Heart right ventricle (tissue), 16 donors: ENCODE measurements at regions of chr7 and their contacts with region 1.

Region 1: GRCh38 chr7:24979863-24980533 is at the start of gene OSBPL3:
- DNase-seq: peak; percentile 94 to 95
- ATAC-seq: peak; percentile 97 to 99 (median 98)
- H3K4me3 ChIP-seq: peak within 1 kb of the TSS; percentile 58 to 90 (median 76)
- H3K27ac ChIP-seq: peak within 1 kb of the TSS; percentile 59 to 92 (median 84)
- H3K4me1 ChIP-seq: peaks cover 0 to 69% (median 12%) of the 10 kb centered on the region in 9 donors
- H3K27me3 ChIP-seq: peaks cover 0 to 14% (median 0%) of the 10 kb centered on the region in 7 donors
- CTCF ChIP-seq: no peak
- total RNA-seq, gene OSBPL3: 1.8 to 10.6 (median 4.6) TPM

Region 2: GRCh38 chr7:24819916-24820689 is 159.9 kb before region 1 on chr7:
- intact Hi-C with region 1: loop called (anchors 2 to 10 kb)
- DNase-seq: peak; percentile 66 to 89
- ATAC-seq: peak; percentile 84 to 96 (median 92)
- H3K4me3 ChIP-seq: no peak overlapping the region
- H3K27ac ChIP-seq: peak overlapping the region in 1 of 10 donors; percentile 75
- H3K4me1 ChIP-seq: peaks cover 0 to 28% (median 11%) of the 10 kb centered on the region in 9 donors
- H3K27me3 ChIP-seq: no peaks in the 10 kb centered on the region
- CTCF ChIP-seq: peak; percentile 60 to 94 (median 90)

Region 3: DNA sequence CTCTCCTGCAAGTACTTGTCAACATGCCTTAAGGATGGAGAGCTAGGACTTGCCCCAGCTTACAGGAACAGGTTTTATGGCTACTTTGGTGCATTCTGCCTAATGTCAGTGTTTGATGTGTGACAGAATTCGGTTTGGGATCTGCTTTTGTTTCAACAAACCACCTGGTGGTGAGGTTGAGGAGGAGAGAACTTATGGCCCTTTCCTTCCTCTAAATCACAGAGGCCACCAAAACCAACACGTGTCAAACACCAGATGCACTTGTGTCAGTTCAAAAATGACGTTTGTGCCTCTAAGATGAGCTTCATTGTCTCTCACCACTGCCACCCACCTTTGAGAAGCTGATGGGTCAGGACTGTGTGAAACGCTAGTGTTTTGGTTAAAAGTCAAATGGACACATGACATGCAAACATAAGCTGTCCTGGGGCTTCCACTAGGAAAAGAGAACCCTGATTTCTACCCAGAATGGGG is 83.9 kb before region 1 on chr7:
- intact Hi-C with region 1: loop called in 4 of 10 experiments (anchors 10 kb)
- DNase-seq: no peak
- ATAC-seq: no peak
- H3K4me3 ChIP-seq: no peak overlapping the region
- H3K27ac ChIP-seq: no peak overlapping the region
- H3K4me1 ChIP-seq: peaks cover 0 to 25% (median 0%) of the 10 kb centered on the region in 9 donors
- H3K27me3 ChIP-seq: no peaks in the 10 kb centered on the region
- CTCF ChIP-seq: no peak

Region 4: GRCh38 chr7:24907311-24907886 is 72.6 kb before region 1 on chr7:
- intact Hi-C with region 1: loop called in 3 of 10 experiments (anchors 10 kb)
- DNase-seq: no peak
- ATAC-seq: peak in 2 of 8 donors; percentile 23 to 42
- H3K4me3 ChIP-seq: peak overlapping the region in 1 of 10 donors; percentile 3
- H3K27ac ChIP-seq: peak overlapping the region in 1 of 10 donors; percentile 57
- H3K4me1 ChIP-seq: peaks cover 0 to 76% (median 12%) of the 10 kb centered on the region in 9 donors
- H3K27me3 ChIP-seq: no peaks in the 10 kb centered on the region
- CTCF ChIP-seq: no peak

Region 5: DNA sequence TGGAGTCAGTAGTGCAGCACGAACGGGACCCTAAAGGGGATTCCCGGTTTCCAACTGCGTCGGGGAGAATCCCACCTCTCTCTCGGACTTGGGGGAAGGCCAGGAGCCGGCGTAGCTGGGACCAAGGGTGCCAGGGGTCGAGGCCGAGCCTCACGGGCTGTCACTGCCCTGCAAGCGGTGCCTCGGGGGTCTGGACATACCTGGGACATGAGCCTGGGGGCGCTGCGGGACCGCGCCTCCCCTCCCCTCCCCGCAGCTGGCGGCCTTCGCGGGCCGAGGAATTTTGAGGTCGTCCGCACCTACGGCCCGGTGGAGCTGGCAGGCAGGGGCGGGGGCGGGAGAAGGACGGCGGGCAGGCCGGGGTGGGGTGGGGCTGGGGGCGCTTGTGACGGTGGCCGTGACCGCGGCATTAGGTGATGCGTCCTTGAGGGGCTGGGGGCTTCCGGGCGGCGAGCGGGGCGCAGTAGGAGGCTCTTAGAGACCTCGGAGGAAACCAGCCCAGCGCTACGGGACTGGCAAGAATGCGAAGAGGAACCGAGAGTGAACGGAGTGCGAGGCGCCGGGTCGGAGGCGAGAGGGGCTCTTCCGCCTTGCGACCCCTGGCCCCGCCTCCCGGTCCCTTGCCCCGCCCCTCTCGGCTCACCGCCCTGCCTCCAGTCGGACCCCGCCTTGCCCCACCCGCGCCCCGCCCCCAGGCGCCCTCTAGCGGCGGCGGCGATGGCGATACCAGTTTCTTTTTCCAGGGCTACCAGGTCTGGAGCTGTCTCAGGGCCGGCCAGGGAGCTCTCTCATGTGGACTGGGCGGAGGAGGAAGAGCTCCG is 200.0 kb after region 1 on chr7:
- intact Hi-C with region 1: loop called in 1 of 10 experiments (anchors 5 kb)
- DNase-seq: peak; percentile 91 to 96
- ATAC-seq: peak; percentile 97 to 99 (median 98)
- H3K4me3 ChIP-seq: peak overlapping the region; percentile 64 to 95 (median 82)
- H3K27ac ChIP-seq: peak overlapping the region in 9 of 10 donors; percentile 52 to 92 (median 73)
- H3K4me1 ChIP-seq: peaks cover 0 to 8% (median 6%) of the 10 kb centered on the region in 9 donors
- H3K27me3 ChIP-seq: peaks cover 0 to 4% (median 0%) of the 10 kb centered on the region in 7 donors
- CTCF ChIP-seq: peak; percentile 90 to 97 (median 93)